B cell (primary cell): ENCODE measurements at regions of chr9 and their contacts with region 1.

Region 1: DNA sequence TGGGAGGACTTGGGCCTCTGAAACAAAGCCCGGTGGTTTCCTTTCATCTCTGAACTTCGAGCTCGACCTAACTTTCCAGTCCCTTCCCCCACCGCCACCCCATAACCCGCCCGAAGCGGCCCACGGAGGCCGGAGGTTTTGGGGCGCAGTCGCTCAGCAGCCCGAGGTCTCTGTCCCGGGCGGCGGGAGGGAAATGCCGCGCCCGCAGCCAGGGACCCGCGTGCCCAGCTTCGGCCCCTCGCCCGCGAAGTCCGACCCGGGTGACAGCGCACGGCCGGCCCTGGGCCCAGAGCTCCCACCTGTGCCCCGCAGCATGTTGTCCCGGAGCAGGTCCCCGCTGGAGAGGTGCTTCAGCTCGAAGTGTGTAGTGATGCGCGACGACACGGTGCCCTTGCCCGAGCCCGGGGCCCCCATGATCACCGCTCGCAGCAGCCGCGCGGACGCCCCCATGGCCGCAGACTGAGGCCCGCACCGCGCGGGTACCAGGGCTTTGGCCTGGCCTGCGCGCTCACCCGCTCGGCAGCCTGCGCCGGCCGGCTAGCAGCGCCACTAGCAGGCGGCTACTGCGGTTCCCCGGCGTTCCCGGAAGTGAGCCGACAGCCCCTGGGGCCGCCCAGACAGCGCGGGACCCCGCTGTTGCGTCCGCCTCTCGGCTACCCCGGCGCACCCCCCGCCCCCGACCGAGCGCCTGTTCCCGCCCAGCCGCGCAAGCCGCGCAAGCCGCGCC is at the start of gene AK3:
- DNase-seq: peak; percentile 92
- ATAC-seq: peak; percentile 92
- H3K4me3 ChIP-seq: peak within 1 kb of the TSS; percentile 73 to 90 (median 85)
- H3K4me3 Mint-ChIP-seq: peak within 1 kb of the TSS; percentile 89
- H3K27ac ChIP-seq: peak within 1 kb of the TSS; percentile 51 to 83
- H3K27ac Mint-ChIP-seq: peak within 1 kb of the TSS; percentile 90
- H3K4me1 ChIP-seq: peaks cover 19 to 23% of the 10 kb centered on the region in 2 donors
- H3K4me1 Mint-ChIP-seq: peaks cover 27% of the 10 kb centered on the region
- H3K27me3 ChIP-seq: no peaks in the 10 kb centered on the region
- H3K27me3 Mint-ChIP-seq: no peaks in the 10 kb centered on the region
- CTCF ChIP-seq: no peak
- total RNA-seq, gene AK3: 20.4 and 22.9 TPM in 2 replicates

Region 2: GRCh38 chr9:4662108-4662988 is 78.5 kb before region 1 on chr9 and contains the start of gene PLPP6:
- CTCF ChIA-PET with region 1: interaction called, 3 read pairs
- POLR2A ChIA-PET with region 1: interaction called, 11 read pairs
- intact Hi-C with region 1: loop called (anchors 1 kb)
- DNase-seq: peak; percentile 86
- ATAC-seq: peak; percentile 85
- H3K4me3 ChIP-seq: peak within 1 kb of the TSS; percentile 39 to 92 (median 74)
- H3K4me3 Mint-ChIP-seq: peak within 1 kb of the TSS; percentile 96
- H3K27ac ChIP-seq: peak within 1 kb of the TSS; percentile 42 to 57
- H3K27ac Mint-ChIP-seq: peak within 1 kb of the TSS; percentile 91
- H3K4me1 ChIP-seq: peaks cover 48 to 50% of the 10 kb centered on the region in 2 donors
- H3K4me1 Mint-ChIP-seq: peaks cover 46% of the 10 kb centered on the region
- H3K27me3 ChIP-seq: peaks cover 0 to 5% (median under 1%) of the 10 kb centered on the region in 4 experiments
- H3K27me3 Mint-ChIP-seq: peaks cover 12% of the 10 kb centered on the region
- CTCF ChIP-seq: peak; percentile 51
- total RNA-seq, gene PLPP6: 12.8 and 14.3 TPM in 2 replicates

Region 3: DNA sequence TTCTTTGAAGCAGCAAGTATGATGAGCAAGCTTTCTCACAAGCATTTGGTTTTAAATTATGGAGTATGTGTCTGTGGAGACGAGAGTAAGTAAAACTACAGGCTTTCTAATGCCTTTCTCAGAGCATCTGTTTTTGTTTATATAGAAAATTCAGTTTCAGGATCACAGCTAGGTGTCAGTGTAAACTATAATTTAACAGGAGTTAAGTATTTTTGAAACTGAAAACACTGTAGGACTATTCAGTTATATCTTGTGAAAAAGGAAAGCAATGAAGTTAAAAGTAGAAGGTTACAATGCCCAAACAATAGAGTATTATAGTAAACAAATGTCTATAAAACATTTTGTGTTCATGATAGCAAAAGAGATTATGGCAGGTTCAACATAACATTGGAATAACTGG is 332.9 kb after region 1 on chr9:
- CTCF ChIA-PET with region 1: no interaction called
- POLR2A ChIA-PET with region 1: no interaction called
- intact Hi-C with region 1: no loop called
- DNase-seq: no peak
- ATAC-seq: no peak
- H3K4me3 ChIP-seq: no peak overlapping the region
- H3K4me3 Mint-ChIP-seq: no peak overlapping the region
- H3K27ac ChIP-seq: no peak overlapping the region
- H3K27ac Mint-ChIP-seq: no peak overlapping the region
- H3K4me1 ChIP-seq: no peaks in the 10 kb centered on the region
- H3K4me1 Mint-ChIP-seq: no peaks in the 10 kb centered on the region
- H3K27me3 ChIP-seq: no peaks in the 10 kb centered on the region
- H3K27me3 Mint-ChIP-seq: no peaks in the 10 kb centered on the region
- CTCF ChIP-seq: peak; percentile 12

Region 4: GRCh38 chr9:5608298-5609225 is 867.8 kb after region 1 on chr9:
- CTCF ChIA-PET with region 1: no interaction called
- POLR2A ChIA-PET with region 1: no interaction called
- intact Hi-C with region 1: loop called (anchors 5 kb)
- DNase-seq: peak; percentile 52
- ATAC-seq: peak; percentile 78
- H3K4me3 ChIP-seq: peak overlapping the region in 4 of 5 experiments; percentile 25 to 64 (median 49)
- H3K4me3 Mint-ChIP-seq: peak overlapping the region; percentile 89
- H3K27ac ChIP-seq: peak overlapping the region; percentile 8 to 74
- H3K27ac Mint-ChIP-seq: peak overlapping the region; percentile 92
- H3K4me1 ChIP-seq: peaks cover 12 to 14% of the 10 kb centered on the region in 2 donors
- H3K4me1 Mint-ChIP-seq: peaks cover 37% of the 10 kb centered on the region
- H3K27me3 ChIP-seq: no peaks in the 10 kb centered on the region
- H3K27me3 Mint-ChIP-seq: no peaks in the 10 kb centered on the region
- CTCF ChIP-seq: no peak